PC-3 (cell line): ENCODE measurements at regions of chr1 and their contacts with region 1.

Region 1: GRCh38 chr1:145978854-145979759 is 14.6 kb downstream of the POLR3GL start:
- DNase-seq: peak; percentile 100
- ATAC-seq: peak; percentile 95
- H3K4me3 ChIP-seq: peak overlapping the region; percentile 45; the same call in 1 of the 2 replicates
- H3K27ac ChIP-seq: peak overlapping the region; percentile 87
- H3K4me1 ChIP-seq: peaks cover 48% of the 10 kb centered on the region
- H3K27me3 ChIP-seq: no peaks in the 10 kb centered on the region
- CTCF ChIP-seq: peak; percentile 63

Region 2: DNA sequence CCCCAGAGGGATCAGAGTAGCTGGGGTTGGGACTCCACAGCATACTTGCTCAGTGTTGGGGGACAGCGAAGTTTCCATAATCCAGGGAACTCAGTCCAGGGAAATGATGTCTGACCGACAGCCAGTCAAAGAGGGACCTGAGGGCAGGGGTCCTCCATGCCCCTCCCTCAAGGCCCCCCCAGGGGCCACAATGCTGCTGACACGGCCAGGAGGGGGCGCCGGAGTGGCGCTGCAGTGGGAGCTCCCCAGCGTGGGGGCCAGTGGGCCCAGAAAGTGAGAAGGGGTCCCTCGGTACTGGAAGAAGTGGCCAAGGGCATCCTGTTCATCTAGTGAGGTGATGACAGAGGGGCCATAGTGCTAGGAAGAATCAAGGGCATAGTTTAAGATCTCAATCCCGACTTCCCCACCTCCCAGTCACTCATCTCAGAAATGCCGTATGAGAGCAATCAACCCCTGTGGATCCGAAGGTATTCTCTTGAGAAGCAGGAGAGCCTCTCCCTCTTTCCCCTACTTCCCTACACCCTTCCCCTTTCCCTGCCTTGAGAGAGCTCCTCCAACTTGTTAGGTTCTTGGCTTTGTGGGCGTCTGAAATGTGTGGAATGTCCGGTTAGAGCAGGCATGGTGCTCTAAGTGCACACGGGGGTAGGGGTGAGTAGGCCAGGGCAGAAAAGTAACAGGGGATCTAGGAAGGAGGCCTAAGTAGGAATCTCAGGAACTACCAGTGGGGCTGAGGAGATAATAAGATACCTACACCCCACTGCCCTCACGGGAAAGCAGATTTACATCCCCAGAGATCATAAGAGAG is 129.5 kb before region 1 on chr1:
- CTCF ChIA-PET with region 1: no interaction called
- POLR2A ChIA-PET with region 1: no interaction called
- intact Hi-C with region 1: no loop called
- DNase-seq: no peak
- ATAC-seq: no peak
- H3K4me3 ChIP-seq: no peak overlapping the region
- H3K27ac ChIP-seq: no peak overlapping the region
- H3K4me1 ChIP-seq: peaks cover 5% of the 10 kb centered on the region; the same call in 1 of the 2 replicates
- H3K27me3 ChIP-seq: no peaks in the 10 kb centered on the region
- CTCF ChIP-seq: peak; percentile 74

Region 3: GRCh38 chr1:145927063-145927886 is 51.8 kb before region 1 on chr1 and contains the start of gene RBM8A:
- CTCF ChIA-PET with region 1: no interaction called
- POLR2A ChIA-PET with region 1: interaction called, 4 read pairs
- intact Hi-C with region 1: loop called (anchors 2 kb)
- DNase-seq: peak; percentile 99
- ATAC-seq: peak; percentile 99
- H3K4me3 ChIP-seq: peak within 1 kb of the TSS; percentile 75
- H3K27ac ChIP-seq: peak within 1 kb of the TSS; percentile 83
- H3K4me1 ChIP-seq: peaks cover 13% of the 10 kb centered on the region
- H3K27me3 ChIP-seq: no peaks in the 10 kb centered on the region
- CTCF ChIP-seq: peak; percentile 81
- total RNA-seq, gene RBM8A: 459 and 482 TPM in 2 replicates

Region 4: DNA sequence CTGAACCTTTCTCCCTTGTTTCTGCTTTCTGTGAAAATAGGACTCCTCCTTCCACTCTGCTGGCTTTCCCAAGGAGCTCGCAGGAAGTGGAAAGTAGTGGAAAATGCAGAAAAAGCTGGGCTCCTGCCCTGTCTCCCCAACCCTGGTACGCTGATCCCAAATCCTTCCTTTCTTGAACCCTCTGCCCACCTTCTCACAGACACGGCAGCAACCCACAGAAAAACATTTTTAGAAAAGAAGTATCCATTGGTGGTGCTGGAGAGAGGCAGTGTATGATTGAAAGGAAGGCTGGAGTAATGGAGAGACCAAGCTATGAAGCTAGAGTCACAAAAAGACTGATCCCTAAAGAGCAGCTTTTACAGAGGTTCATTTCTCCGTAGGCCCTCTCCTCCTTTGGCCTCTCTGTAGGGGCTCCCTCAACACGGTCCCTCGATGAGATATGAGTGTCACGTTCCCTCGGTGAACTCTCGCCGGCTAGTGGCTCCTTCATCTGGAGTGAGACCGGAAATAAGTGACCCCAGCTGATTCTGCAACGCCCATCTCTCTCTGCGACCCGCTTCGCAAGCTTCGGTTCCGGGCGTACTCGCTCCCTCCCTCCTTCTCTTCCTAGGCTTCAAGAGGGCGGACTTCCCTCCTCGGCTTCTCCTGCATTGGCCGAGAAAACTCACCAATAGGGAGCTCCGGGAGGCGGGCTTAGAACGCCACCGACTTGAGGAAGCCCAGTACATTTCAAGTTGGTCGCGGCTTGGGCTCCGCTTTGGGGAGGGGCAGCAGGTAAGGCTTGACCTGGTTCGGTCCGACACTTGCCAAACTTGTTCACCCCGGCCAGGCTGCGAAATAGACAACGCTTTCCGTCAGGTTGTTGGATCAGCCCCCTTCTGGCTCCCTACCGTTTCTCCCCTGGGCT is 14.9 kb before region 1 on chr1 and contains the starts of genes ANKRD34A and POLR3GL:
- CTCF ChIA-PET with region 1: interaction called, 6 read pairs
- POLR2A ChIA-PET with region 1: interaction called, 3 read pairs
- intact Hi-C with region 1: loop called (anchors 1 kb)
- DNase-seq: peak; percentile 99
- ATAC-seq: peak; percentile 84
- H3K4me3 ChIP-seq: peak within 1 kb of the TSS; percentile 76
- H3K27ac ChIP-seq: peak within 1 kb of the TSS; percentile 3; the same call in 1 of the 2 replicates
- H3K4me1 ChIP-seq: peaks cover 35% of the 10 kb centered on the region
- H3K27me3 ChIP-seq: no peaks in the 10 kb centered on the region
- CTCF ChIP-seq: no peak
- total RNA-seq, gene ANKRD34A: 0.29 and 2.8 TPM in 2 replicates
- total RNA-seq, gene POLR3GL: 3.7 and 8.4 TPM in 2 replicates

Region 5: DNA sequence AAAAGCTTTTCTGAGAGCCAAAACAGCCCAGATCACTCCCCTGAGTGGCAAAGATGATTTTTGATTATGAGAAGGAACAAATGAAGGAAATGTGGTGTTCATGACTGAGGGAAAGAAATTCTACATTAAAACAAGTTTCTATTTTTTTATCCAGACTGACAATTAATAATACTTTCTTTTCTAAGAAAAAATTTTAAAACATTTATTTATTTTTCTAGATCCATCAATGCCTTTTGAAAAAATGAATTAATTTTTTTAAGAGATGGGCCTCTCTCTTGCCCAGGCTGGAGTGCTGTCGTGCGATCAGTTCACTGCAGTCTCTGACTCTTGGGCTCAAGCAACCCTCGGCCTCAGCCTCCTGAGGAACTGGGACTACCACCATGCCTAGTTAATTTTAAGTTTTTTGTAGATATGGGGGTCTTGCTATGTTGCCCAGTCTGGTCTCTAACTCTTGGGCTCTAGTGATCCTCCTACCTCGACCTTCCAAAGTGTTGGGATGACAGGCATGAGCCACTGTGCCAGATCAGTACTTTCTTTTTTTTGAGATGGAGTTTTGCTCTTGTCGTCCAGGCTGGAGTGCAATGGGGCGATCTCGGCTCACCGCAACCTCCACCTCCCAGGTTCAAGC is 28.5 kb after region 1 on chr1:
- CTCF ChIA-PET with region 1: interaction called, 34 read pairs
- POLR2A ChIA-PET with region 1: interaction called, 4 read pairs
- intact Hi-C with region 1: loop called (anchors 1 kb)
- DNase-seq: no peak
- ATAC-seq: no peak
- H3K4me3 ChIP-seq: no peak overlapping the region
- H3K27ac ChIP-seq: no peak overlapping the region
- H3K4me1 ChIP-seq: peaks cover 3% of the 10 kb centered on the region; the same call in 1 of the 2 replicates
- H3K27me3 ChIP-seq: no peaks in the 10 kb centered on the region
- CTCF ChIP-seq: no peak

Region 6: DNA sequence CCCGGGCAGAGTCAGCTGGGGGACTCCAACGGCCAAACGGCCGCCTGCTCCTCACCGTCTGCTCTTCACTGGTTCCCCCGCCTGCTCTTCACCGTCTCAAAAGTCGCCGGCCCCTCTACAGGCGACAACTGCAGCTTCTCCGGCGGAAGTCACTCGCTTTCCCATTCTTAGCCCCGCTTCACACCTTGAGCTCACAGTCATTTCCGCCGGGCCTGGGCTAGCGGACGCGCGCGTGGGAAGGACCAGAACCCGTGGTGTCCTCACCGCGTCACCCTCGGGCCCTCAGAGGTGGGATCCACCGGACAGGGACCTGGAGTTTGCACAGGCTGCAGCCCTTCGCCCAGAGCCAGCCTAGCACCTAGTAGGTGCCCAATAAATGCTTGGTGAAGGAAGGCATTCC is 70.3 kb after region 1 on chr1:
- CTCF ChIA-PET with region 1: no interaction called
- POLR2A ChIA-PET with region 1: interaction called, 15 read pairs
- intact Hi-C with region 1: no loop called
- DNase-seq: no peak
- ATAC-seq: no peak
- H3K4me3 ChIP-seq: no peak overlapping the region
- H3K27ac ChIP-seq: no peak overlapping the region
- H3K4me1 ChIP-seq: no peaks in the 10 kb centered on the region
- H3K27me3 ChIP-seq: no peaks in the 10 kb centered on the region
- CTCF ChIP-seq: no peak